CD4-positive, alpha-beta memory T cell (primary cell): ENCODE measurements at regions of chr3 and their contacts with region 1.

Region 1: GRCh38 chr3:11651900-11652299 is 8.2 kb upstream of the VGLL4 start:
- DNase-seq: peak in 4 of 5 donors; percentile 35 to 43 (median 40)
- H3K4me3 ChIP-seq: no peak overlapping the region
- H3K4me3 Mint-ChIP-seq: no peak overlapping the region
- H3K27ac ChIP-seq: no peak overlapping the region
- H3K27ac Mint-ChIP-seq: no peak overlapping the region
- H3K4me1 ChIP-seq: no peaks in the 10 kb centered on the region
- H3K4me1 Mint-ChIP-seq: peaks cover 0 to 5% (median 3%) of the 10 kb centered on the region in 4 donors
- H3K27me3 ChIP-seq: no peaks in the 10 kb centered on the region
- H3K27me3 Mint-ChIP-seq: no peaks in the 10 kb centered on the region

Region 2: GRCh38 chr3:10758304-10759061 is 893.4 kb before region 1 on chr3:
- CTCF ChIA-PET with region 1: interaction called, 3 read pairs
- POLR2A ChIA-PET with region 1: no interaction called
- intact Hi-C with region 1: loop called (anchors 5 kb)
- DNase-seq: peak in 4 of 5 donors; percentile 23 to 33 (median 32)
- H3K4me3 ChIP-seq: no peak overlapping the region
- H3K4me3 Mint-ChIP-seq: no peak overlapping the region
- H3K27ac ChIP-seq: no peak overlapping the region
- H3K27ac Mint-ChIP-seq: no peak overlapping the region
- H3K4me1 ChIP-seq: no peaks in the 10 kb centered on the region
- H3K4me1 Mint-ChIP-seq: no peaks in the 10 kb centered on the region
- H3K27me3 ChIP-seq: no peaks in the 10 kb centered on the region
- H3K27me3 Mint-ChIP-seq: peaks cover 28 to 44% of the 10 kb centered on the region in 2 donors

Region 3: GRCh38 chr3:10945683-10946287 is 706.1 kb before region 1 on chr3:
- CTCF ChIA-PET with region 1: no interaction called
- POLR2A ChIA-PET with region 1: no interaction called
- intact Hi-C with region 1: loop called (anchors 5 kb)
- DNase-seq: peak in 3 of 5 donors; percentile 8 to 21 (median 10)
- H3K4me3 ChIP-seq: no peak overlapping the region
- H3K4me3 Mint-ChIP-seq: no peak overlapping the region
- H3K27ac ChIP-seq: no peak overlapping the region
- H3K27ac Mint-ChIP-seq: no peak overlapping the region
- H3K4me1 ChIP-seq: no peaks in the 10 kb centered on the region
- H3K4me1 Mint-ChIP-seq: no peaks in the 10 kb centered on the region
- H3K27me3 ChIP-seq: no peaks in the 10 kb centered on the region
- H3K27me3 Mint-ChIP-seq: peaks cover 2 to 10% of the 10 kb centered on the region in 2 donors

Region 4: GRCh38 chr3:11236595-11237461 is 415.1 kb before region 1 on chr3:
- CTCF ChIA-PET with region 1: interaction called, 67 read pairs
- POLR2A ChIA-PET with region 1: no interaction called
- intact Hi-C with region 1: loop called (anchors 1 kb)
- DNase-seq: peak; percentile 67 to 72 (median 70)
- H3K4me3 ChIP-seq: no peak overlapping the region
- H3K4me3 Mint-ChIP-seq: no peak overlapping the region
- H3K27ac ChIP-seq: no peak overlapping the region
- H3K27ac Mint-ChIP-seq: no peak overlapping the region
- H3K4me1 ChIP-seq: no peaks in the 10 kb centered on the region
- H3K4me1 Mint-ChIP-seq: peaks cover 0 to 2% (median 0%) of the 10 kb centered on the region in 4 donors
- H3K27me3 ChIP-seq: no peaks in the 10 kb centered on the region
- H3K27me3 Mint-ChIP-seq: peaks cover 4 to 8% of the 10 kb centered on the region in 2 donors

Region 5: DNA sequence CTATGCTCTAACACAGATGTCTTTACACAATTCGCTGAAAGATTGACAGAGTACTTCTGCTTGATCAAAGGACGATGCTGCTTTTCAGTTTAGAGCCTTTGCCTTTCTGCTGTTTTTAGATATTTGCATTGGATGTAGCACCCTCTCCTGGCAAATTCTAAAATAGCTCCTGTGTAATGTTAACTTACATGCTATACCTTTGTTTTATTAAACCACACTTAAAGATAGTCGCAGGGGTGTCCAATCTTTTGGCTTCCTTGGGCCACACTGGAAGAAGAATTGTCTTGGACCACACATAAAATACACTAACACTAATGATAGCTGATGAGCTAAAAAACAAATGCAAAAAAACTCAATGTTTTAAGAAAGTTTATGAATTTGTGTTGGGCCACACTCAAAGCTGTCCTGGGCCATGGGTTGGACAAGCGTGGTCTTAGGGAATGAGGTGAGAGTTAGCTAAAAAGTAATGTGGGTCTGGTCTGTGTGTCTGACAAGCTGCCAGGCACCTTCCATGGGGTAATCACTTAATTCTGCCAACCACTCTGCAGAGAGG is 316.8 kb before region 1 on chr3:
- CTCF ChIA-PET with region 1: interaction called, 4 read pairs
- POLR2A ChIA-PET with region 1: no interaction called
- intact Hi-C with region 1: loop called (anchors 5 kb)
- DNase-seq: peak; percentile 34 to 53 (median 51)
- H3K4me3 ChIP-seq: no peak overlapping the region
- H3K4me3 Mint-ChIP-seq: no peak overlapping the region
- H3K27ac ChIP-seq: no peak overlapping the region
- H3K27ac Mint-ChIP-seq: peak overlapping the region in 2 of 7 donors; percentile 30 to 39
- H3K4me1 ChIP-seq: no peaks in the 10 kb centered on the region
- H3K4me1 Mint-ChIP-seq: peaks cover 0 to 3% (median 2%) of the 10 kb centered on the region in 4 donors
- H3K27me3 ChIP-seq: no peaks in the 10 kb centered on the region
- H3K27me3 Mint-ChIP-seq: no peaks in the 10 kb centered on the region

Region 6: GRCh38 chr3:11379233-11379823 is 272.6 kb before region 1 on chr3:
- CTCF ChIA-PET with region 1: interaction called, 109 read pairs
- POLR2A ChIA-PET with region 1: interaction called, 7 read pairs
- intact Hi-C with region 1: loop called (anchors 1 kb)
- DNase-seq: peak in 4 of 5 donors; percentile 30 to 41 (median 34)
- H3K4me3 ChIP-seq: no peak overlapping the region
- H3K4me3 Mint-ChIP-seq: no peak overlapping the region
- H3K27ac ChIP-seq: no peak overlapping the region
- H3K27ac Mint-ChIP-seq: no peak overlapping the region
- H3K4me1 ChIP-seq: no peaks in the 10 kb centered on the region
- H3K4me1 Mint-ChIP-seq: no peaks in the 10 kb centered on the region
- H3K27me3 ChIP-seq: no peaks in the 10 kb centered on the region
- H3K27me3 Mint-ChIP-seq: no peaks in the 10 kb centered on the region

Region 7: DNA sequence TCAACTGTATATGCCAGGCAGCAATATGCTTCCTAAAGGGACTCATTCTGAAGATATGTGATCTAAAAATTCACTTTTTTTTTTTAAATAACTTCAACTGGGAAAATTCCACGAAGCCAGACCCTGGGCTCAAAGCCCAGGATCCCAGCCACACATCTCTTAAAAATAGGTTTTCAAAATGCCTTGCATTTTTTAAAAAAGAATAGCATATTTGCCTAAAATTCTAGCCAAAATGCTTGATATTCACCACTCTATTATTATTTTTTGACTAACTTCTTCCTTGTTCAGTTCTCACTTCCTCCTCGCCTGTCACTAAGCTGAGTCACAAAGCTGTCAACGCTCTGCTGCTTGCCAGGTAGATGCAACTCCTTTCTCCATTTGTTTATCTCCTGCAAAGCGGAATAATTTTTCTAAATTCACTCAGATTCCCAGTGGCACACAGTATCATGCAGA is 19.8 kb after region 1 on chr3:
- CTCF ChIA-PET with region 1: no interaction called
- POLR2A ChIA-PET with region 1: no interaction called
- intact Hi-C with region 1: no loop called
- DNase-seq: no peak
- H3K4me3 ChIP-seq: no peak overlapping the region
- H3K4me3 Mint-ChIP-seq: no peak overlapping the region
- H3K27ac ChIP-seq: no peak overlapping the region
- H3K27ac Mint-ChIP-seq: no peak overlapping the region
- H3K4me1 ChIP-seq: no peaks in the 10 kb centered on the region
- H3K4me1 Mint-ChIP-seq: peaks cover 0 to 7% (median 7%) of the 10 kb centered on the region in 4 donors
- H3K27me3 ChIP-seq: no peaks in the 10 kb centered on the region
- H3K27me3 Mint-ChIP-seq: no peaks in the 10 kb centered on the region

Region 8: DNA sequence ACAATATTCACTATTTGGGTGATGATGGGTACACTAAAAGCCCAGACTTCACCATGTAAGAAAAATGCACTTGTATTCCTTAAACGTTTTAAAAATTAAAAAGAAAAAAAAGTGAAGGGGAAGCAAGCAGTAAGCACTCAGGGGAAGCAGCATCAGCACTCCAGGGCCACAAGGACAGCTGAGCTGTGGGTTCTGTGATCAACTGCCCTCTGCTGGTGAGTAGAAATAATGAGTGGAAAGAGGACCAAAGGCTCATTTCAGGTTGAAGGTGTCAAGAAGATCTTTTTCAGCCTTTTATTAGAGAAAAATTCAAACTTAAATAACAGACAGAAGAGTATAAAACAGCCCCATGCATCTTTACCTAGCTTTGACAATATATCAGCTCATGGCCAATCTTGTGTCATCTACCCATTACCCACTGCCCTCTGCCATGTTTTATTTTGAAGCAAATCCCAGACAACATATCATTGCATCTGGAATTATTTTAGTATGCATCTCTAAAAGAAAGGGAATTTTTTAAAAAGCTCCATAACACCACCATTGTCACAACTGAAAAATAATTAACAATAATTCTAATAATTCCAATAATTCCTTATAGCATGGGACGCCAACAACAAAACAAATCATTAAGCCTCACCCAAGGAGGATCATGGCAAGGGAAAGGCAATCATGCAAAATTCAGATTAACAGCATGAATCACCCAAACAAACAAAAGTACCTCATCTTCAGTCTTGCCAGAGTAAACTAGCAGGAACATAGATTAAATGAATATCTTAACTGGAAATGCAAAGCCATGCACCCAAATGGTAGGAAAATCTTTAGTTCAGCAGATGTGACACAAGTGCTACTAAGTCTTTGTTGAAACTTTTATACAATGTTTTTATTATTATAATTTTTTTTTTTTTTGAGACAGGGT is 152.3 kb after region 1 on chr3:
- CTCF ChIA-PET with region 1: interaction called, 14 read pairs
- POLR2A ChIA-PET with region 1: no interaction called
- intact Hi-C with region 1: loop called (anchors 2 kb)
- DNase-seq: peak; percentile 41 to 58 (median 44)
- H3K4me3 ChIP-seq: no peak overlapping the region
- H3K4me3 Mint-ChIP-seq: no peak overlapping the region
- H3K27ac ChIP-seq: no peak overlapping the region
- H3K27ac Mint-ChIP-seq: no peak overlapping the region
- H3K4me1 ChIP-seq: no peaks in the 10 kb centered on the region
- H3K4me1 Mint-ChIP-seq: peaks cover 0 to 24% (median 4%) of the 10 kb centered on the region in 4 donors
- H3K27me3 ChIP-seq: no peaks in the 10 kb centered on the region
- H3K27me3 Mint-ChIP-seq: no peaks in the 10 kb centered on the region